ENCODE measurements at regions of chr7 and their contacts with region 1.

Region 1: DNA sequence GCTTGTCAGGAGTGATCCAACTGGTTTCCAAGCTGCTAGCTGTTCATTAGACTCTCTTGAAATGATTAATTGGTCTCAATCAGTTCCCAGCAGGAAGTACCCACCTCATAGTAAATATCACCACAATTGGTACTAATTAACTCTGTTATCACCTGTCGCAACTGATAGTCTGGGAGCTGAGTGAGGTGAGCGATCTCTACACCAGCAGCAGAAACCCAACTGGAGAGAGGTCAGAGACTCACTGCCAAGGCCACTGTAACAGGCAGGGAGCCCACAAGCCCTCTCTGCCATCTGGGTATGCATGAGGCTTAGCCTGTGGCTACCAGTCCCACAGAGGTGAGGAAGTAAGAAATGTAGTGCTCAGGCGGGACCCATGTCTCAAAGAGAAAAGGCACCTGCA is 245.5 kb downstream of the DYNC1I1 start:
- DNase-seq: no peak
- H3K27ac ChIP-seq: no peak overlapping the region
- CTCF ChIP-seq: no peak

Region 2: DNA sequence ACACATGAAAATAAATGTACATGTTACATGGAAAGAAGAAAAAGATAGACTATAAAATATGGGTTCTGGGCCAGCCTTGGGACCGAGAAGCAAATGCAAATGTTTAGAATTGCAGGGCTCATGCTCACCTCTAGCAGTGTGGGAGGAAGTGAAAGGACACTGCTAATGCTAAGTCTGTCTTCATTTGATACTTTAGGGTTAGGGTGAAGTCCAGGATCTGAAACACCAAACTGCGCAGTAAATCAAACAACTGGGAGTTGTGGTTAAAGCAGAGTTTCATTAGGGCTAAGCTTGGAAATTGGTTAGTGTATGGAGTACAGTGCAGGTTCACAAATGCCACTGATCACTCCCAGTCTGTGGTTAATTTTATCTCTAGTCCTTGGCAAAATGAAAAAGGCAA is 348.4 kb before region 1 on chr7:
- CTCF ChIA-PET with region 1: no interaction called
- POLR2A ChIA-PET with region 1: no interaction called
- DNase-seq: no peak
- H3K27ac ChIP-seq: no peak overlapping the region
- CTCF ChIP-seq: no peak

Region 3: GRCh38 chr7:96188174-96188581 is 170.3 kb after region 1 on chr7:
- CTCF ChIA-PET with region 1: no interaction called
- POLR2A ChIA-PET with region 1: no interaction called
- DNase-seq: no peak
- H3K27ac ChIP-seq: no peak overlapping the region
- CTCF ChIP-seq: no peak

Region 4: DNA sequence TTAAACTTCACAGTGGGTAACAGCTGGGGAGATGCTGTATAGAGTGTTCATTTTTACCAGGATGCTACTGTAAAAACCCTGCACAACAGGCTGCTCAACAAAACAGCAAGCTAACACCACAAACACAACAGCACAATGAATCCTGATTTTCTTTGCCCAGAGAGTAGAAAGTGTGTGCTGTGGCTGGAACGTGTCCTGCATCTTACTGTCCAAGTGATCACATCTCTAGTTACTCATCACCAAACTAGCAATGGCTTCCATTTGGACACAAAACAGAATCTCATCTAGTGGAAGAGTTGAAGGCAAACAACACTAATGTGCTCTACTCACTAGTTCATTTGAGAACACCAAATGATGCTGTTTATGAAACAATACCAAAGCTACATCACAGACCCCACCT is 182.9 kb after region 1 on chr7:
- CTCF ChIA-PET with region 1: no interaction called
- POLR2A ChIA-PET with region 1: interaction called, 13 read pairs
- DNase-seq: no peak
- H3K27ac ChIP-seq: no peak overlapping the region
- CTCF ChIP-seq: no peak